ENCODE measurements at regions of chr17 and their contacts with region 1.

Region 1: GRCh38 chr17:40474419-40475002 is 26.9 kb downstream of the TNS4 start:
- DNase-seq: no peak
- H3K4me3 ChIP-seq: no peak overlapping the region
- H3K27ac ChIP-seq: no peak overlapping the region
- H3K4me1 ChIP-seq: peaks cover 12 to 15% of the 10 kb centered on the region in 2 experiments; a peak in 3 of 4 replicates
- H3K27me3 ChIP-seq: no peaks in the 10 kb centered on the region
- CTCF ChIP-seq: no peak
- EP300 ChIP-seq: no peak
- RAD21 ChIP-seq: no peak

Region 2: GRCh38 chr17:39828443-39828842 is 646.1 kb before region 1 on chr17:
- CTCF ChIA-PET with region 1: no interaction called
- POLR2A ChIA-PET with region 1: no interaction called
- DNase-seq: no peak
- H3K4me3 ChIP-seq: no peak overlapping the region
- H3K27ac ChIP-seq: no peak overlapping the region
- H3K4me1 ChIP-seq: no peaks in the 10 kb centered on the region
- H3K27me3 ChIP-seq: peaks cover 8% of the 10 kb centered on the region
- CTCF ChIP-seq: no peak
- EP300 ChIP-seq: no peak
- RAD21 ChIP-seq: no peak

Region 3: GRCh38 chr17:40290629-40291287 is 183.8 kb before region 1 on chr17:
- CTCF ChIA-PET with region 1: no interaction called
- POLR2A ChIA-PET with region 1: no interaction called
- DNase-seq: peak; percentile 45
- H3K4me3 ChIP-seq: no peak overlapping the region
- H3K27ac ChIP-seq: peak overlapping the region; percentile 9 to 16; a peak in 2 of 4 replicates
- H3K4me1 ChIP-seq: peaks cover 0 to 7% of the 10 kb centered on the region in 2 experiments; a peak in 2 of 4 replicates
- H3K27me3 ChIP-seq: no peaks in the 10 kb centered on the region
- CTCF ChIP-seq: peak; percentile 79
- EP300 ChIP-seq: no peak
- RAD21 ChIP-seq: peak; percentile 86

Region 4: GRCh38 chr17:40387680-40388079 is 86.8 kb before region 1 on chr17:
- CTCF ChIA-PET with region 1: interaction called, 12 read pairs
- POLR2A ChIA-PET with region 1: no interaction called
- DNase-seq: no peak
- H3K4me3 ChIP-seq: no peak overlapping the region
- H3K27ac ChIP-seq: no peak overlapping the region
- H3K4me1 ChIP-seq: no peaks in the 10 kb centered on the region
- H3K27me3 ChIP-seq: no peaks in the 10 kb centered on the region
- CTCF ChIP-seq: no peak
- EP300 ChIP-seq: no peak
- RAD21 ChIP-seq: no peak

Region 5: DNA sequence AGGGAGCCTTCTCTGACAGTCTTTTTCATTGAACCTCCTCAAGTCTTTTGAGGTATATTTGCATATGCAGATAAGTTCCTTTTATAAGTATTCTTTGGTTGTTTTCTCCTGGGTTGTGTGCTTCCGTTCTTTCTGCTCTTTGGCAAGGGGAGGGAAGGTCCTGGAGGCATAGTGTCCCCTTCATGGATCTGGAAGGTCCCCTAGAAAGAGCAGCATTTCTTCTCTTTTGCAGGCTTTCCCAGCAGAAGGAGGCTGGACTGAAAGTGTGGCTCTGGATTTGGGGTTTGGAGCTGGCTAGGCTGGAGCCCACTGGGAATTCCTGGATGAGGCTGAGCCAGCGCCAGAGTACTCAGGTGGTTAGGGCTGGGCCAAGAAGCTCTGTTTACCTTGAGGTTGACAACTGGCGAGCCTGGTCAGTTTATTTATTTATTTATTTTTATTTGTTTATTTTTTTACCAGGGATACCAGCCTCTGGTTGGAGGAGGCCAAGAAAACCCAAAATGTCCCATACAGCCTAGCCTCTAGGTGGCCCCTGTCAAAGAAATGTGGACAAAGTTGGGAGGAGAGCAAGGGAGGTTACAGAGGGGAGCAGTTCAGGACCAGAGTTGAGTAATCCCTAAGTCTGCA is 51.4 kb before region 1 on chr17:
- CTCF ChIA-PET with region 1: interaction called, 37 read pairs
- POLR2A ChIA-PET with region 1: no interaction called
- DNase-seq: no peak
- H3K4me3 ChIP-seq: no peak overlapping the region
- H3K27ac ChIP-seq: no peak overlapping the region
- H3K4me1 ChIP-seq: peaks cover 0 to 6% of the 10 kb centered on the region in 2 experiments; a peak in 1 of 4 replicates
- H3K27me3 ChIP-seq: no peaks in the 10 kb centered on the region
- CTCF ChIP-seq: no peak; the same call in 1 of the 2 replicates
- EP300 ChIP-seq: no peak
- RAD21 ChIP-seq: no peak

Region 6: GRCh38 chr17:40457964-40458791 is 16.3 kb before region 1 on chr17:
- CTCF ChIA-PET with region 1: interaction called, 123 read pairs
- POLR2A ChIA-PET with region 1: interaction called, 5 read pairs
- DNase-seq: peak; percentile 73
- H3K4me3 ChIP-seq: peak overlapping the region in 1 of 2 experiments; percentile 17; a peak in 1 of 4 replicates
- H3K27ac ChIP-seq: peak overlapping the region; percentile 68 to 92
- H3K4me1 ChIP-seq: peaks cover 33 to 84% of the 10 kb centered on the region in 2 experiments
- H3K27me3 ChIP-seq: no peaks in the 10 kb centered on the region
- CTCF ChIP-seq: no peak
- EP300 ChIP-seq: peak; percentile 80 to 95; a peak in 3 of 4 replicates
- RAD21 ChIP-seq: no peak

Region 7: GRCh38 chr17:40515491-40516041 is 41.1 kb after region 1 on chr17:
- CTCF ChIA-PET with region 1: interaction called, 19 read pairs
- POLR2A ChIA-PET with region 1: no interaction called
- DNase-seq: no peak
- H3K4me3 ChIP-seq: no peak overlapping the region
- H3K27ac ChIP-seq: no peak overlapping the region
- H3K4me1 ChIP-seq: peaks cover 14 to 27% of the 10 kb centered on the region in 2 experiments; a peak in 3 of 4 replicates
- H3K27me3 ChIP-seq: no peaks in the 10 kb centered on the region
- CTCF ChIP-seq: no peak
- EP300 ChIP-seq: no peak
- RAD21 ChIP-seq: no peak

Region 8: DNA sequence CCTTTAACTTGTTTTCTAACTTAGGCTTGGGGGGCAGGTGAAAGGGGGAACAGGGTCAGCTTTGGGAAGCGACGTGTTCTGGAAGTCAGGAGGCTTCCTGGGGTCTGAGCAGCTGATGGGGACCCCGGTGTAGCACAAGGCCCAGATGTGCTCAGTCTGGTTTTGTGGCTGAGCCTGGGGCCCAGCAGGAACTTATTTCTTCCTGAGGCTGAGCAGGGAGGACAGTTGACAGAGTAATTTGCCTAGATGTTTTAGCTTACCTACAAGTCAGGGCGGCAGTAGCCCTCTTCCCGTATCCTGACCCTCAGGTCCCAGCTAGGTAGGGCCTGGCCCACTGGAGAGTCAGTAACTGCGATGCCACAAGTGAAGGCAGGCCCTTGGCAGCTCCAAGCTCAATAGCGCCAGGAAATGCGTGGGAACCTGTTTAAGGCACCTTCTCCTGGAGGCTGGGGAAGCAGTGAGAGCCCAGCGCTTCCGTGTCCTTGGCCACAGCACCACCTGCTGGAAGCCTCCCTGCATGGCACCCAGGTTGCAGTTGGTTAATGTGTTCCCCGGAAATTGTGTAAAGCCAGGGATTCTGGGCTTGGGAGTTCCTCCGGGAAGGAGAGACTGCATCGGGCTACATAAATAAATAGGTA is 85.6 kb after region 1 on chr17:
- CTCF ChIA-PET with region 1: interaction called, 85 read pairs
- POLR2A ChIA-PET with region 1: interaction called, 5 read pairs
- DNase-seq: peak; percentile 91
- H3K4me3 ChIP-seq: peak overlapping the region in 1 of 2 experiments; percentile 18; a peak in 2 of 4 replicates
- H3K27ac ChIP-seq: peak overlapping the region in 1 of 2 experiments; percentile 79; a peak in 2 of 4 replicates
- H3K4me1 ChIP-seq: peaks cover 0 to 51% of the 10 kb centered on the region in 2 experiments; a peak in 2 of 4 replicates
- H3K27me3 ChIP-seq: peaks cover 11% of the 10 kb centered on the region; the same call in 1 of the 2 replicates
- CTCF ChIP-seq: peak; percentile 96
- EP300 ChIP-seq: 0 out of 4 replicates have a peak, but pooled peaks of 1 of the 2 experiments have one; percentile 34
- RAD21 ChIP-seq: peak; percentile 100

Region 9: DNA sequence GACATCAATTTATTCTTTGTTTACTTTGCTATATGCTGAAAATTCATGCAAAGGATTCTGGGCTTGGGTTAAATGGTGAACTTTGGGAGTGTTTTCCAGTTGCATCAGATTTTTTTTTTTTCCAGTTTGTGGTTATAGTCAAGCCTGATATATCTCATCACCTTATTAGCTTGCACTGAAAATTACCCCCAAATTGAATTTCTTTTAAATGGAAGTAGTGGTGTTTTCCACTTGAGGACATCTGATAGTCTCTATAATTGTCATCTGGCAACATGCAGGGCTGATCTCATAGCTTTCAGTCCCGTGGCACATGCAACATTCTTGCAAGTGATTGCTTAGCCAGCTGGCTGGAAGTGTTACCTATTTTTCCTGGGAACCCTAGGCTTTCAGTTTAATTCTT is 539.1 kb after region 1 on chr17:
- CTCF ChIA-PET with region 1: no interaction called
- POLR2A ChIA-PET with region 1: no interaction called
- DNase-seq: no peak
- H3K4me3 ChIP-seq: no peak overlapping the region
- H3K27ac ChIP-seq: no peak overlapping the region
- H3K4me1 ChIP-seq: no peaks in the 10 kb centered on the region
- H3K27me3 ChIP-seq: peaks cover 38% of the 10 kb centered on the region; the same call in 1 of the 2 replicates
- CTCF ChIP-seq: no peak
- EP300 ChIP-seq: no peak
- RAD21 ChIP-seq: no peak

Measured in SK-N-SH (cell line).